Sciatic nerve (tissue), 2 donors: ENCODE measurements at regions of chr7 and their contacts with region 1.

Region 1: DNA sequence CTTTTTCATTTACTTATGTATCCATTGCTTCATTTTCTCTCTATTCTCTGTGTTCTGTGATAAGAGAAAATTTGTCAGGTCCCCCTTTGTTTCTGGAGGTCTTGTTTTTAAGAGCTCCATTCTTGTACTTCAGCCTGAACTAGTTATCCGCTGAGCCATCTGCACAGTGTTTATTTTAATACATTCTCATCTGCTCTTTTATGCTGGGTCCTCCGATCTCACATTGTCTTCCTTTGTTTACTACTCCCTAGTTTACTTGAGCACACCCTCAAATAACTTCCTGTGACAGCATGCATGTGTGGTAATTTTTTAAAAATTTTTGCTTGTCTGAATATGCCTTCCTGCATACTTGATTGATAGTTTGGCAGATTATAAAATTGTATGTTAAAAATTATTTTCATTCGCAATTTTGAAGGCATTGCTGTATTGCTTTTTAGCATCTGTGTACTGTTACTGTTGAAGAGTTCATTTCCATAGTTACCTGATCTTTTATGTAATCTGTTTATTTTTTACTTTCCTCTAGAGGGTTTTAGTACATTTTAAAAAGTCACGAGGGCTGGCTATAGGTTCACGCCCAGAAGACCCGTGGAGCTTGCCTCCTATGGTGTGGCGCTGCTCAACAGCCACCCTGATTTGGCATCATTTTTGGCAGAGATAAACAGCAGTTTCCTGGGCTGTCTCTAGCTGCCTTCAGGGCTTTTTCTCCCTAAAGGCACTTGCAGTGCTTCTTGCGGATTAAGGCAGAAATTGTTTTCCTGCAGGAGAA is 31.9 kb downstream of the RSBN1L start:
- DNase-seq: no peak
- ATAC-seq: peak; percentile 68

Region 2: DNA sequence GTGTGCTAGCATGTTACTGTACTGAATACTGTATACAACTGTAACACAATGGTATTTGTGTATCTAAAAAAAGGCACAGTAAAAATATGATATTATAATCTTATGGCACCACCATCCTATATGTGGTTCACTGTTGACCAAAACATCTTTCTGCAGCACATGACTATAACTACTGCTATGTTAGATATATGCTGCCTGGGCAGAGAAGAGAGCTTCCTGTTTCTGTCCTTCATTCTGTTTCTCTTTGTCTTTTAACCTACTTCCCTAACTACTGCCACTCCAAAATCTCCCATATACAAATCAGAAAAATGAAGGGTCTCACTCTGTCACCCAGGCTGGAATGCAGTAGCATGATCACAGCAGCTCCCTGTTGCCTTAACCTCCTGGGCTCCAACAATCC is 519.7 kb before region 1 on chr7:
- intact Hi-C with region 1: no loop called
- DNase-seq: no peak
- ATAC-seq: no peak

Region 3: DNA sequence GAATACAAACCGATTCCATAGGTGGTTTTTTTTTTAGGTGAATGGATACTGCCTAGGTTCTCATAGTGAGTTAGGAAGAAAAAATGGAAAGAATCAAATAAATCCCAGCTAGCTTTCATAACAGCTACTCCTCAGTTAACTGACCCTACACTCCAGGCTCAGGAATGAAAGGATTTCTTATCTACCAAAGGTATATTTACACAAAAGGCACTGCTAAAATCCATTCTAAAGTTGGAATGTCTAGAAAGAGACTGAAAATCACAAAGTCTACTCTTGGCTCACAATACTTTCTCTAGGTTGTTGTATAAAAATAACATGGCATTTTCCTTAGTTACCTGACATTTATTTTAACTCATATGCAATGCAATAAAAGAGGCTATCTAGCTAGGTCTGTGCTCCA is 1350.2 kb after region 1 on chr7:
- intact Hi-C with region 1: loop called (anchors 10 kb)
- DNase-seq: no peak
- ATAC-seq: no peak